ENCODE measurements at regions of chr3 and their contacts with region 1.

Region 1: GRCh38 chr3:32467333-32468070 is 35.1 kb downstream of the CMTM6 start:
- DNase-seq: peak; percentile 86 to 93
- H3K4me3 ChIP-seq: peak overlapping the region; percentile 37 to 52 (median 50)
- H3K27ac ChIP-seq: peak overlapping the region in 4 of 5 donors; percentile 41 to 73 (median 60)
- H3K4me1 ChIP-seq: peaks cover 23 to 53% (median 32%) of the 10 kb centered on the region in 4 donors
- H3K27me3 ChIP-seq: no peaks in the 10 kb centered on the region
- CTCF ChIP-seq: peak in 6 of 7 experiments; percentile 72 to 100 (median 98)
- EP300 ChIP-seq: no peak
- POLR2A ChIP-seq: no peak

Region 2: DNA sequence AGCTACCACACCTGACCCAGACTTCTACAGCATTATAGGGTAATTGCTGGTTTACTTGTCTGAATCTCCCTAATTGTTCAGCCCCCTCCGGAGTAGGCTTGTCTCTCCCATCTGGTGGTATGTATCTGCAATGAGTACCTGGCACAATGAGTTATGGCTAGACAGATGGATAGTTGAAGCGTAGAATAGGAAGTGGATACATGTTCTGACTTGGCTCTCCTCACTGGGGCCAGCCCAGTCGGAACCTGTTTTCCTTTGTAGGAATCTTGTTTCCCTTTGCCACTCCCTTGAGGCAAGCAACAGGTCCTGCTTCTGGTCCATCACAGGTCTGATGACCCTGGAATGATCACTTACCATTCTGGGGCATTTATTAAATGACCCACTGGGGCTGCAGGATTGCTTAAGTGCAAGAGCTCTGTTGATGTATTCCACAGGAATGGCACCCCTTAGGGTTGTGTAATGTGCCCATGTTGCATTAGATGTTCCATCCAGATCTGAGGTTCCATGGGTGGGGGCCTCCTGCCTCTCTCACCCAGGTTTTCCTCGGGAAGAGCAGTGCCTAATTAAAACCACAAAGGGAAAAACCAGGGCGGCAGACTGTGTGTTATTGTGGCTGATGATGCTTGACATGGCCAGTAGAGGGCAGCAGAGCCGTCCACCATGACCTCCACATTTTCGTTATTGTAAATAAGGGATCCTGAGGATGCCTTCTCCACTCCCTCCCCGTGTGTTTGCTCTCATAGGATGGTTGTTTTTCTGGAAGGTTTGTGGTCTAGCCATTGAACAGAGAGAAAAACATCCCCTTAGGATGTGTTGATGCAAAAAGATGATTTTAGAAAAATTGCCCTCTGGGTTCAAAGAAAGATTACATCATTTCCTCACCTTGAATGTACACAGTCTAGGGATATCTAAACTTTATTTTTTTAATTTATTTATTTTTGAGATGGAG is 171.0 kb before region 1 on chr3:
- intact Hi-C with region 1: loop called (anchors 10 kb)
- DNase-seq: peak; percentile 65 to 87
- H3K4me3 ChIP-seq: no peak overlapping the region
- H3K27ac ChIP-seq: no peak overlapping the region
- H3K4me1 ChIP-seq: peaks cover 0 to 18% (median 9%) of the 10 kb centered on the region in 4 donors
- H3K27me3 ChIP-seq: no peaks in the 10 kb centered on the region
- CTCF ChIP-seq: peak in 5 of 7 experiments; percentile 63 to 89 (median 79)
- EP300 ChIP-seq: no peak
- POLR2A ChIP-seq: no peak

Region 3: DNA sequence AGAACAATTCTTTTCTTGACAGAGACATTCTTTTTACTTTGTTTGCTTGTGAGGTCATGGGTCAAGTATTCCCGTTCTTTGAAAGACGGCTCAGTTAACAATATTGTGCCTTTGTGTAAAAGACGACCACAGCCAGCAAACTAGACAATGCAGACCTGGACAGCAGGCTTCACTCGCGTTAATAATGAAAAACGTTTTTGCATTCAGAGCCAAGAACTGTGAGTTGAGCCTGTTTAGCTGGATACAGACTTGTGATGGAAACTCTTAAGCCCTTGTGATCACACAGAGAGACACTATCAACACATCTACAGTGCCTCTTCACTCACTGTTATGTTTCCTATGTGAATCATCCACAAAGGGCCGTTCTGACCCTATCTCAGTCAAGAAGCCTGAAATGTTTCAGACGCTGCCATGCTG is 113.1 kb before region 1 on chr3:
- intact Hi-C with region 1: no loop called
- DNase-seq: peak in 1 of 2 donors; percentile 46
- H3K4me3 ChIP-seq: no peak overlapping the region
- H3K27ac ChIP-seq: no peak overlapping the region
- H3K4me1 ChIP-seq: peaks cover 4 to 12% (median 9%) of the 10 kb centered on the region in 4 donors
- H3K27me3 ChIP-seq: no peaks in the 10 kb centered on the region
- CTCF ChIP-seq: no peak
- EP300 ChIP-seq: no peak
- POLR2A ChIP-seq: no peak

Region 4: DNA sequence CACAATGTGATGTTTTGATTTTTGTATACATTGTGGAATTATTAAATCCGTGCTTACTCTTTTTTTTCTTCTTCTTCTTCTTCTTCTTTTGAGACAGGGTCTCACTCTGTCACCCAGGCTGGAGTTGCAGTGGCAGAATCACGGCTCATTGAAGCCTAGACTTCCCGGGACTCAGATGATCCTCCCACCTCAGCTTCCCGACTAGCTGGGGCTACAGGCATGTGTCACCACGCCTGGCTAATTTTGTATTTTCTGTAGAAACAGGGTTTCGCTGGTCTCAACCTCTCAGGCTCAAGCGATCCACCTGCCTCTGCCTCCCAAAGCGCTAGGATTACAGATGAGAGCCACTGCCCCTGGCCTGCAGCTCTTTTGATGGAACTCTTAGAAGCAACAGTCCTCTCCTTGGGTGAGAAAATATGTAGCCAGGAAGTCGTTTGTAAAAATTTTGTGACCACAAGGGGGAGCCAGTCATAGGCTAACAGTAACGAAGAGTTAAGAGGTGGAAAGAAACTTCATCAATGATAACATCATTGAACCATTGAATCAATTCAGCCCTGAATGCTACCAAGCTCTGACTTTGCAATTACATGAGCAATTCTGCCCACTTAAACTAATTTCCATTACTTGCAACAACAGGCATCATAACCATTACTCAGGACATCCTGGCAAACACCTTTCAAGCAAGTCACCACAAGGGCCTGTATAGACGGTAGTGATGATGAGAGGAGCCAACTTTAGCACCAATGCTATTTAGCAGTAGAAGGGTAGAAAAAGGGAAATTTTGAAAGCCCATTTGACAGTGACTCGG is 92.5 kb before region 1 on chr3:
- intact Hi-C with region 1: loop called (anchors 5 kb)
- DNase-seq: peak; percentile 59 to 89
- H3K4me3 ChIP-seq: no peak overlapping the region
- H3K27ac ChIP-seq: no peak overlapping the region
- H3K4me1 ChIP-seq: no peaks in the 10 kb centered on the region
- H3K27me3 ChIP-seq: no peaks in the 10 kb centered on the region
- CTCF ChIP-seq: peak in 5 of 7 experiments; percentile 37 to 68 (median 65)
- EP300 ChIP-seq: no peak
- POLR2A ChIP-seq: no peak

Region 5: DNA sequence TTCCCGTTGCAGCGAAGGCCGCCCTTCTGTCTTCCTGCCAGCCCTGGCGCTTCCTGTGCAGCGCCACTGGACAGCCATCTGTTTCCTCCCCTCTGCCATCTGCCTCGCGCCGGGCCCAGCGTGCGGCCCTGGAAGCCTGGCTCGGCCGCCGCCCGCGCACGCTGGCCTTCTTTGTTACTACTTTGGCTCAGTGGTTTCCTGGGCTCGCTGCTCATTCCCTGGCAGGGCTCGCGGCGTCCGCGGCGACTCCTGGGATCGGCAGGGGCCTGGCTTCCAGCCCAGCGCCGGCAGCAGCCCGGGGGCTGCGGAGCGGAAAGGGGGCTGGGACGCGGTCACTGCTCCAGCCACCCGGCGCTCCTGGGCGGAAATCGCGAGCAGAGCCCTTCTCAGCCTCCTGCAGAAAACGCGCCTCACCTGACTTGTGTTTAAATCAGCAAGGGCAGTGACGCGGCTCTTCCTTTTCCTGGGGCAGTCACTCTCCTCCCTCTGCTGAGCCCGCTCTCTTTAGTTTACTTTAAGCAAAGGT is 65.9 kb before region 1 on chr3:
- intact Hi-C with region 1: no loop called
- DNase-seq: peak; percentile 74 to 91
- H3K4me3 ChIP-seq: peak overlapping the region; percentile 37 to 54 (median 50)
- H3K27ac ChIP-seq: peak overlapping the region; percentile 84 to 97 (median 88)
- H3K4me1 ChIP-seq: peaks cover 21 to 86% (median 57%) of the 10 kb centered on the region in 4 donors
- H3K27me3 ChIP-seq: no peaks in the 10 kb centered on the region
- CTCF ChIP-seq: no peak
- EP300 ChIP-seq: no peak
- POLR2A ChIP-seq: no peak

Region 6: GRCh38 chr3:32593903-32594525 is 126.5 kb after region 1 on chr3:
- intact Hi-C with region 1: no loop called
- DNase-seq: no peak
- H3K4me3 ChIP-seq: no peak overlapping the region
- H3K27ac ChIP-seq: no peak overlapping the region
- H3K4me1 ChIP-seq: peaks cover 0 to 5% (median 0%) of the 10 kb centered on the region in 4 donors
- H3K27me3 ChIP-seq: no peaks in the 10 kb centered on the region
- CTCF ChIP-seq: no peak
- EP300 ChIP-seq: no peak
- POLR2A ChIP-seq: no peak

Measured in stomach (tissue), 19 donors.